Calu3 (cell line): ENCODE measurements at regions of chr6 and their contacts with region 1.

Region 1: DNA sequence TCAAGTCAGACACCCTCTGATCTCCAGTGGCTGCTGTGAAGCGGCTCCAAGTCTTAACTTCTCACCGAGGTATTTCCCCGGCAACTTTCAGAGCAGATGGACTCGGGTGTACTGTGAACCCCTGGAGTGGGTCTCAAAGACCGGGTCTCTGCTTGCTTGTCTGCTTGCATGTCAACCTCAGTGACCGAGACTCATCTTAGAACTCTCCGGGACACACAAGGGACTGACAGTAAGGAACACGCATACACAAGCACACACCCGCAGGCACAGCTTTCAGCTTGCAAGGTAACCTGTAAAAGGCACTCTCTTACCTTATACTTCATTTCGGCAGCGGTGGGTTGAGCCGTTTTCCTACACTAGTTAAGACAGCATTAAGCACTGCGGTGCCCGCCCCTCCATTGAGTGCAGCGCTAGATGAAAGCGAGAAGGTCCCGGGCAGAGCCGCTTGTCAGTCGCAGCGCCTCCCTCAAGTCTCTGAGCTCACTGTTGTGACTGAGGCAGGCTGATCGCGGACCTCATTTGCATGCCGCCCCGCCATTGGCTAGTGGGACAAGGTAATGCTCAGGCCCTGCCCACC is at the start of gene NEDD9:
- DNase-seq: peak; percentile 90
- H3K4me3 Mint-ChIP-seq: peak within 1 kb of the TSS; percentile 73
- H3K27ac Mint-ChIP-seq: peak within 1 kb of the TSS; percentile 81
- H3K4me1 Mint-ChIP-seq: peaks cover 32% of the 10 kb centered on the region
- H3K27me3 Mint-ChIP-seq: no peaks in the 10 kb centered on the region
- CTCF ChIP-seq: no peak
- total RNA-seq, gene NEDD9: 18.2 and 28.1 TPM in 2 replicates

Region 2: DNA sequence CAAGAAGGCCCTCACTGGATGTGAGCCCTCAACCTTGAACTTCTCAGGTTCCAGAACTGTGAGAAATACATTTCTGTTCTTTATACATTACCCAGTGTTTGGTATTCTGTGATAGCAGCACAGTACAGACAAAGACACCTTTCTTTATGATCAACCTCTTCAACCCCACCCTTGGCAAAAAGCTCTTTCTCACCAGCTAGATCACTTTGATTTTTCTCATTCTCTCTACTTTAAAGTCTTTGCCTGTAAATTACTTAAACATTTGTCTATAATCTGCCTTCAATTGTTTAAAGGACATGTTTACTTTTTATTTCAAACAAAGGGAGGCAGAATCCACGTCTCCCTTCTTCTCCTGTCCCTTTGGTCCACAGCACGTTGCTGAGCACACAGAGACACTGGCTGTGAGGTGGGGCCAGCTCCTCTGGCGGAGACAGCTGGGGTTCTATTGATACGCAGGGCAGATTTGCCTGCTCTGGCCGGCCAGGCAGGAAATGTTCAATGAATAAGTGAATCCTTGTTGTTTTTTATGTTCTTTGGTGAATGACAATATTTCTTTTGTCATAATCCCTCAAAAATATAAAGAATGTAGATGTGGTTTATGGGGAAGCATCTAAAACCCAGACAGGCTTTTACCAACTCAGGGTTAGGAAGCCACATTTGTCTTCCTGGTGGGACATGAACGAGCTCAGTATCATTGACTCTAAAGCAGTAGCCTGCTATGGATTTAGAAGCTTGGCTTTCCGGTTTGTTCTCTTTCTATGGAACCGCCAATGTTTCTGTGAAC is 52.7 kb before region 1 on chr6:
- CTCF ChIA-PET with region 1: no interaction called
- intact Hi-C with region 1: loop called (anchors 5 kb)
- DNase-seq: peak; percentile 31
- H3K4me3 Mint-ChIP-seq: no peak overlapping the region
- H3K27ac Mint-ChIP-seq: peak overlapping the region; percentile 55
- H3K4me1 Mint-ChIP-seq: peaks cover 37% of the 10 kb centered on the region
- H3K27me3 Mint-ChIP-seq: no peaks in the 10 kb centered on the region
- CTCF ChIP-seq: no peak

Region 3: GRCh38 chr6:11277275-11278206 is 45.3 kb after region 1 on chr6:
- CTCF ChIA-PET with region 1: interaction called, 6 read pairs
- intact Hi-C with region 1: loop called (anchors 5 kb)
- DNase-seq: peak; percentile 41
- H3K4me3 Mint-ChIP-seq: no peak overlapping the region
- H3K27ac Mint-ChIP-seq: peak overlapping the region; percentile 52
- H3K4me1 Mint-ChIP-seq: peaks cover 55% of the 10 kb centered on the region
- H3K27me3 Mint-ChIP-seq: no peaks in the 10 kb centered on the region
- CTCF ChIP-seq: no peak

Region 4: GRCh38 chr6:11296449-11297375 is 64.4 kb after region 1 on chr6:
- CTCF ChIA-PET with region 1: interaction called, 20 read pairs
- intact Hi-C with region 1: no loop called
- DNase-seq: peak; percentile 13
- H3K4me3 Mint-ChIP-seq: no peak overlapping the region
- H3K27ac Mint-ChIP-seq: peak overlapping the region; percentile 54
- H3K4me1 Mint-ChIP-seq: peaks cover 27% of the 10 kb centered on the region
- H3K27me3 Mint-ChIP-seq: no peaks in the 10 kb centered on the region
- CTCF ChIP-seq: no peak

Region 5: DNA sequence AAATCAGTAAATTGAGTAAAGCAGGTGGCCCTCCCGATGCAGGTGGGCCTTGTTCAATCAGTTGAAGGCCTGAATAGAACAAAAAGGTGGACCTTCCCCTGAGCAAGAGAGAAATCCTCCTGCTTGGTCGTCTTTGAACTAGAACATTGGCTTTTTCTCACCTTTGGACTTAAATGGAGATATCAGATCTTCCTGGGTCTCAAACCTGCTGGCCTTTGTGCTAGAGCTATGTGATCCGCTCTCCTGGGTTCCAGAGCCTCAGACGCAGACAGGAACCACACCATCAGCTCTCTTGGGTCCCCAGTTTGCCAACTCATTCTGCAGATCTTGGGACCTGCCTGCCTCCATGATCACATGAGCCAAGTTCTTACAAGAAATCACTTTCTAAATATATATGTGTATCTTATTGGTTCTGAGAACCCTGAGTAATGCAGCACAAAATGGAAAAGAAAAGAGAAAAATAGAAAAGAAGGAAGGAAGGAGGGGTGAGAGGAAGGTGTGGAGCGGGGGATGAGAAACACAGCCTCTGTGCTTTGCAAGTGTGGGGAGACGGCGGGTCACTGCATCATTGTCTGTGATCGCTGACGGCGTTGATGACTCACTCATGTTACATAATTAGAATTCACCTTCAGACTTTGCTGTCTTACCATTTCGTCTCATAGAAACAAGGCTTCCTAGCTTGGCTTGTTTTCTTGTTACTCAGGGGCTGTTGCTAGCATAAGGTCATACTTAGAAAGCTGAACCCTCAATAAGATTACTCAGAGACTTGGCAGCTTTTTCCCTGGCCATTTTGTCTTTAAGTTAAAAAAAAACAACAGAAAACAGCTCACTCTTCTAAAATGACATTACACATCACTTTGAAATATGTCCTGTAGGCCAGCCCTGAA is 85.8 kb after region 1 on chr6:
- CTCF ChIA-PET with region 1: interaction called, 10 read pairs
- intact Hi-C with region 1: loop called (anchors 2 kb)
- DNase-seq: peak; percentile 73
- H3K4me3 Mint-ChIP-seq: no peak overlapping the region
- H3K27ac Mint-ChIP-seq: peak overlapping the region; percentile 98
- H3K4me1 Mint-ChIP-seq: peaks cover 53% of the 10 kb centered on the region
- H3K27me3 Mint-ChIP-seq: no peaks in the 10 kb centered on the region
- CTCF ChIP-seq: no peak

Region 6: GRCh38 chr6:11343963-11344747 is 111.9 kb after region 1 on chr6:
- CTCF ChIA-PET with region 1: no interaction called
- intact Hi-C with region 1: loop called (anchors 2 kb)
- DNase-seq: peak; percentile 64
- H3K4me3 Mint-ChIP-seq: no peak overlapping the region
- H3K27ac Mint-ChIP-seq: peak overlapping the region; percentile 87
- H3K4me1 Mint-ChIP-seq: peaks cover 37% of the 10 kb centered on the region
- H3K27me3 Mint-ChIP-seq: no peaks in the 10 kb centered on the region
- CTCF ChIP-seq: no peak

Region 7: DNA sequence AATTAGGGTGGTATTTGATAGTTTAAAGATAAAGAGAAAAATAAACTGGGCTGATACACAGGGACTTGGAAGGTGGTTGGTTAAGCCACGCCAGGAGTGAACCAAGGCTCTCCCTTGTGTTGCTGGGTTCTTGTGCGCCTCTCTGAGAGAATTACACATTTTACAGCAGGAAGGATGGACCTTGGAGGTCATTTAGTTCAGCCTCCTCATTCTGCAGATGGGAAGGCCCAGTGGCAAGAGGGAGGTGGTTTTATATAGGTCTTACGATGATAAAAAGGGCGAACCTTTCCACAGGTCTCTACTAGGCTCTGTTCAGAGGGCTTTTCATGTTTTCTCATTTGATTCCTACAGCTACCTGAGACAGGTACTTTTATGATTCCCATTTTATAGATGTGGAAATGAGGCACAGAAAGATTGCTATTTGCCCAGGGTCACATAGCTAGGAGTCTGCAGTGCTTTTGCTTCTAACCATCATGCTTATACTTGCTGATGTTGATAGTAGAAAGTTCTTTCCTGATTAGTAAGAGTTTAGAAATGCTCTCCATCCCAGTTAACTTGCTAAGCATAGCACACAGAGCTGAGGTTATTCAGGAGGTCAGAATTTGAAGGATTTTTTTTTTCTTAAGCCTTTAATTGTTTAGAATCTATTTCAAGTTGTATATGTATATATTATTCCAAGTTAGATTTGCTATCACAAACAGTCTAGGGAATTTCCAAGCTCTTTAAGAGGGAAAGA is 792.6 kb after region 1 on chr6:
- CTCF ChIA-PET with region 1: no interaction called
- intact Hi-C with region 1: no loop called
- DNase-seq: no peak
- H3K4me3 Mint-ChIP-seq: no peak overlapping the region
- H3K27ac Mint-ChIP-seq: no peak overlapping the region
- H3K4me1 Mint-ChIP-seq: peaks cover 9% of the 10 kb centered on the region
- H3K27me3 Mint-ChIP-seq: no peaks in the 10 kb centered on the region
- CTCF ChIP-seq: no peak